ENCODE measurements at regions of chr1 and their contacts with region 1.

Region 1: DNA sequence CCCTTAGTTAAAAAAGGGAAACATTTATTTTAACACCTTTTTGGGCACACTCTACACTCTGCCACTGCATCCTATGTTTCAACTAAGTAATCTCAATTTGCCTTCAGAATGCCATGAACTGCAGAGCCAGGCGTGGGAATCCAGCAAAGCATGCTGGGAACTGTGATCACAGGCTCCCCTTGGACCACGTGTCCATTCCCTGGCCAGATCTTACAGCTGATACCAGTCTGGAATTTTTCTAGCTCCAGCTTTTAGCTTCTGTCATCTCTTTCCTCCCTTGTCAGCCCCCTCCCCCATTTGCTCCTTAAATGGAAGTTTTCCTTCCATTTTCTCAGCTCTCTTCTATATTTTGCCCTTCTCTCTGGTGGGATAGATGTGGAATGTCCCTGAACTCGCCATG is 29.4 kb downstream of the RCSD1 start:
- DNase-seq: no peak
- ATAC-seq: peak; percentile 39

Region 2: GRCh38 chr1:167517535-167518330 is 141.7 kb before region 1 on chr1:
- intact Hi-C with region 1: no loop called
- DNase-seq: no peak
- ATAC-seq: peak; percentile 46

Region 3: DNA sequence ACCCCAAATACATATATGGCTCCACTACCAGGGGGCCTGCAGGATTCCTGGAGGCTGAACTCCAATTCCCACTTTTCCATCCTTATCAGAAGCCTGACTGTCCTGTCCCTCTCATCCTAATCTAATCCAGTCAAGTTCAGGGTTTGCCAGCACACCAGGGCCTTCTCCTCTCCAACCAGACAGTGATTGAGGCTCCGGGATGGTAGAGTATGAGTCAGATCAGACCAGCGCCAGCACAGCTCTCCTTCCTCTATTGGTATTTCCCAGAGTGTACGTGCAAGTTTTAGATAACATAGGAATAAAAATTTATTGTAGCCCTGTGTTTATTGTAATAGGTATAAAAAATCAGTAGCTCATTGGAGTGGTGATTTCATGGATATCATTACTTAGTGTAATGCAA is 53.9 kb before region 1 on chr1:
- intact Hi-C with region 1: loop called in 1 of 2 experiments (anchors 2 kb)
- DNase-seq: no peak
- ATAC-seq: peak; percentile 60

Region 4: GRCh38 chr1:167714439-167715156 is 55.1 kb after region 1 on chr1:
- intact Hi-C with region 1: no loop called
- DNase-seq: peak; percentile 86 to 92
- ATAC-seq: peak; percentile 52